G401 (cell line): ENCODE measurements at regions of chr9 and their contacts with region 1.

Region 1: DNA sequence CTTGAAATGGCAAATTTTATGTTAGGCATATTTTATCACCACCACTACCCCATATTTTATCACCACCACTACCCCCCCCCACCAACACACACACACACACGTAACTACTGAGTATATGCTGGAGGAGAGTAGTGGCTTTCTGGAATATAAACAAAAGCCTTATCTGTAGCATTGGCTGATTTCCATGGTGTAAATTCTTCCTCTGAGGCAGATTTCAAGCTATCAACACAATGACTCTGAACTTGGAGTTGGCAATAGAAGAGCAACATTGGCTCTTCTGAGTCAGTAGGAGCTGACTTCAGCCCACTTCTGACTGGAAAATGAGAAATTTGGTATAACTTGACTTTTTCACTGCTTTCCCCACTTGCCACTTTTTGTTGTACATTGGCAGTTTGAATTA is 143.0 kb downstream of the CAVIN4 start:
- DNase-seq: no peak

Region 2: GRCh38 chr9:101307051-101307450 is 586.1 kb after region 1 on chr9:
- in situ Hi-C with region 1: loop called (anchors 10 kb)
- DNase-seq: peak; percentile 10